ENCODE measurements at regions of chr1 and their contacts with region 1.

Region 1: GRCh38 chr1:241895013-241895412 is 47.0 kb downstream of the EXO1 start:
- DNase-seq: no peak
- H3K4me3 ChIP-seq: no peak overlapping the region
- H3K27me3 ChIP-seq: no peaks in the 10 kb centered on the region
- CTCF ChIP-seq: no peak

Region 2: DNA sequence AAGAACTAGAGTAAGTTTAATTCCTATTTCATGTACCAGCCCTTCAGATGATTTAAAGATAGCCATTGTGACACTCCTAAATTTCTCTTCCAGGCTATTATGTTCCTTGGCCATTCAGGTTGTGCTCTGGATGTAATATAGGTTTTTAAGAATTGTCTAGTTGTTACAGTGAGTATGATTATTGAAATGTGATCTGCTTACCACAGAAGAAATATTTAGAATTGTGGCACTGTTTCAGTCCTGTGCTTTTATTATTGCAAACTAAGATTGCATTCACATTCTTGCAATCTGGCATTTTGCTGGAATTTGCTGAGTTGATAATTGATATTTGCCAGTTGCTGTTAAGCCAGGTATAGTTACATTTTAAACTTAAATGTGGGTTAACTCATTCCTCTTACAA is 24.7 kb before region 1 on chr1:
- CTCF ChIA-PET with region 1: no interaction called
- POLR2A ChIA-PET with region 1: interaction called, 10 read pairs
- DNase-seq: no peak
- H3K4me3 ChIP-seq: no peak overlapping the region
- H3K27me3 ChIP-seq: no peaks in the 10 kb centered on the region
- CTCF ChIP-seq: no peak

Region 3: GRCh38 chr1:241881444-241881843 is 13.6 kb before region 1 on chr1:
- CTCF ChIA-PET with region 1: interaction called, 11 read pairs
- POLR2A ChIA-PET with region 1: no interaction called
- DNase-seq: no peak
- H3K4me3 ChIP-seq: no peak overlapping the region
- H3K27me3 ChIP-seq: no peaks in the 10 kb centered on the region
- CTCF ChIP-seq: no peak

Region 4: GRCh38 chr1:241918879-241919278 is 23.9 kb after region 1 on chr1:
- CTCF ChIA-PET with region 1: interaction called, 10 read pairs
- POLR2A ChIA-PET with region 1: no interaction called
- DNase-seq: no peak
- H3K4me3 ChIP-seq: no peak overlapping the region
- H3K27me3 ChIP-seq: no peaks in the 10 kb centered on the region
- CTCF ChIP-seq: no peak

Region 5: GRCh38 chr1:241985787-241986186 is 90.8 kb after region 1 on chr1:
- CTCF ChIA-PET with region 1: interaction called, 45 read pairs
- POLR2A ChIA-PET with region 1: no interaction called
- DNase-seq: no peak
- H3K4me3 ChIP-seq: no peak overlapping the region
- H3K27me3 ChIP-seq: no peaks in the 10 kb centered on the region
- CTCF ChIP-seq: peak; percentile 68

Region 6: DNA sequence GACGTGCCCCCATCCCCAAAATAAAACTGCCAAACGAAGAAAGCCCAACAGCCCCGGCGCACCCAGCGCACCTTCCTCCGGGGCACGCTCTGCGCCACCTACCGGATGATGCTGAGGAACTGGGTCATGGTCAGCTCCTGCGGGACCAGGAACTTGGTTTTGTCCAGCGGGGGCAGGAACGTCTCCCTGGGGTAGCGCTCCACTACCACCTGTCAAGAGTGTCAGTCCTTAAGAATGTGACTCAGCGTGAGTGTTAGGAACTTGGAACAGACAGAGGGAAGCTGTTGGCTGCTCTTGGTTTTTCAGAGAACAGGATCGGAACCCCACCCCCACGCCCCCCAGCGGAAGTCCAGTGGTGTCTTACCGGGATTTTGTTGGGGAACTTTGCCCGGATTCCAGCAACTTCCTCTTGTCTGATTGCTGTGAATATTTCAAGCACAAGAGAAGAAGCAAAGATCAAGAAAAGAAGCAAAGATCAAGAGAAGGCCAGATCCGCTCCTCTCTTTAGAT is 103.5 kb after region 1 on chr1:
- CTCF ChIA-PET with region 1: interaction called, 61 read pairs
- POLR2A ChIA-PET with region 1: no interaction called
- DNase-seq: no peak
- H3K4me3 ChIP-seq: peak overlapping the region; percentile 32
- H3K27me3 ChIP-seq: no peaks in the 10 kb centered on the region
- CTCF ChIP-seq: peak; percentile 83

Region 7: DNA sequence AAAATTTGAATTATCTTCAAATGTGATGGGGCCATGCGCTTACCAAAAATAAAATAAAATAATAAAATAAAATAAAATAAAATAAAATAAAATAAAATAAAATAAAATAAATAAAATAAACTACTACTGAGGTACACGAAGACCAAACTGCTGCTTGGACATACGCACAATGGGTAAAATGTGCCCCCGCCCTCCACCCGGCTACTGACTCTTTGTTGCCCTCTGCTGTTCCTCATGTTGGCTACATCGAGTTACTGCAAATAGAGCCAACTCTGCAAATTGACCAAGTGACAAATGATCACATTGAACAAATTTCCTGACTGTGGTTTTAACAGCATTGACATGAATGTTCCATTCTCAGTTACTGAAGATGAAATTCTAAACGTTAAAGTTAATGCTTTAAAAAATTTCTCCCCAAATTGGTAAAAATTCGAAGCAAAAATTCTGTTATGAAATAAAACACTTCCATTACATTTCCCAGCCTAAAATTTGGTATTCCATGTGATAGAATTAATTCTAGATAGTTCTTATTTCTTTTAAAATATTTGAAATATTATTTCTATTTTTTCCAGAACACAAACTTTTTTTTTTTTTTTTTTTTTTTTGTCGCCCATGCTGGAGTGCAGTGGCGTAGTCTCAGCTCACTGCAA is 122.7 kb after region 1 on chr1:
- CTCF ChIA-PET with region 1: interaction called, 12 read pairs
- POLR2A ChIA-PET with region 1: no interaction called
- DNase-seq: no peak
- H3K4me3 ChIP-seq: no peak overlapping the region
- H3K27me3 ChIP-seq: no peaks in the 10 kb centered on the region
- CTCF ChIP-seq: peak; percentile 76

Region 8: GRCh38 chr1:242377781-242378180 is 482.8 kb after region 1 on chr1:
- CTCF ChIA-PET with region 1: no interaction called
- POLR2A ChIA-PET with region 1: no interaction called
- DNase-seq: no peak
- H3K4me3 ChIP-seq: no peak overlapping the region
- H3K27me3 ChIP-seq: no peaks in the 10 kb centered on the region
- CTCF ChIP-seq: no peak

Measured in BJ (cell line).